Naive thymus-derived CD8-positive, alpha-beta T cell (primary cell): ENCODE measurements at regions of chr11 and their contacts with region 1.

Region 1: GRCh38 chr11:94926698-94927237 is 46.6 kb downstream of the CWC15 start:
- DNase-seq: no peak
- ATAC-seq: no peak
- H3K4me3 Mint-ChIP-seq: peak overlapping the region in 3 of 10 donors; percentile 12 to 29 (median 22)
- H3K27ac Mint-ChIP-seq: peak overlapping the region in 2 of 10 donors; percentile 25 to 53
- H3K4me1 Mint-ChIP-seq: peaks cover 37 to 56% (median 51%) of the 10 kb centered on the region in 4 donors
- H3K27me3 Mint-ChIP-seq: peaks cover 0 to 4% (median 0%) of the 10 kb centered on the region in 5 donors

Region 2: GRCh38 chr11:94973099-94973968 is 46.6 kb after region 1 on chr11 and contains the starts of genes CWC15 and KDM4D:
- POLR2A ChIA-PET with region 1: interaction called, 25 read pairs
- DNase-seq: peak; percentile 89 to 98 (median 94)
- ATAC-seq: peak; percentile 97 to 98
- H3K4me3 Mint-ChIP-seq: peak within 1 kb of the TSS; percentile 94 to 100 (median 99)
- H3K27ac Mint-ChIP-seq: peak within 1 kb of the TSS; percentile 95 to 99 (median 99)
- H3K4me1 Mint-ChIP-seq: peaks cover 10 to 37% (median 26%) of the 10 kb centered on the region in 4 donors
- H3K27me3 Mint-ChIP-seq: peaks cover 0 to 1% (median 0%) of the 10 kb centered on the region in 5 donors
- polyA plus RNA-seq, gene CWC15: 47.6 to 61.3 (median 51.5) TPM
- polyA plus RNA-seq, gene KDM4D: 0.13 to 0.24 (median 0.17) TPM